ENCODE measurements at regions of chr15 and their contacts with region 1.

Region 1: DNA sequence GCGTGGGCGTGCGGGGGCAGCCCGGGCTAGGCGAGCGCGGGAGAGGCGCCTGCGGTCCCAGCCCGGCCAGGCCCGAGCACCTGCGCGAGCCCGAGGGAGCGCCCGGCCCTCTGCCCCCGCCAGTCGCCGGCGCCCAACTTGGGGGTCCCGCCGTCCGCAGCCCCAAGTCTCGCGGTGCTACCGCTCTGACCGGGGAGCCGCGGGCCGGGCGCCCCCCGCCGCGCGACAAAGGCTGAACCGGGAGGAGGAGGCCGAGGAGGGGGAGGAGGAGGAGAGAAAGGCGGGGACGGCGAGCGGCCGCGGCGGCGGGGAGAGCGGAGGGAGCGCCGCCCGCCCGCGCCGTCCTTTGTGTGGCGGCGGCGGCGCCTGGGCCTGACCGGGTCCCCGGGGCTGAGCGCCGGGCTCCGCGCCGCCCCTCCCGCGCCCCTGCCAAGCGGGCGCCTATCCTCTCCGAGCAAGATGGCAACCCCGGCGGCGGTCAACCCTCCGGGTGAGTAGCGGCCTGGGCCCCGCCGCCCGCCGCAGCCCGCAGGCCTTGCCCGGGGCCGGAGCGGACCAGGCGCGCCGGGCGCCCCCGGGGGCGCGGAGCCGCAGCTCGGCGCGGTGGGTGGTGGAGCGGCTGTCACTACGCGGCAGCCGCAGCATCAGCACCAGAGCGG is at the start of gene ARNT2:
- DNase-seq: peak; percentile 18 to 61
- ATAC-seq: peak; percentile 67 to 84 (median 72)
- H3K4me3 ChIP-seq: peak within 1 kb of the TSS; percentile 69
- H3K27ac ChIP-seq: peak within 1 kb of the TSS; percentile 50
- H3K4me1 ChIP-seq: peaks cover 11% of the 10 kb centered on the region
- H3K27me3 ChIP-seq: no peaks in the 10 kb centered on the region
- CTCF ChIP-seq: no peak
- total RNA-seq, gene ARNT2: 2.7 to 12.2 (median 8.0) TPM

Region 2: GRCh38 chr15:80323285-80323684 is 80.9 kb before region 1 on chr15:
- intact Hi-C with region 1: loop called in 1 of 2 experiments (anchors 10 kb)
- DNase-seq: no peak
- ATAC-seq: no peak
- H3K4me3 ChIP-seq: no peak overlapping the region
- H3K27ac ChIP-seq: no peak overlapping the region
- H3K4me1 ChIP-seq: no peaks in the 10 kb centered on the region
- H3K27me3 ChIP-seq: no peaks in the 10 kb centered on the region
- CTCF ChIP-seq: peak; percentile 38

Region 3: GRCh38 chr15:80512726-80513660 is 108.8 kb after region 1 on chr15:
- intact Hi-C with region 1: no loop called
- DNase-seq: no peak
- ATAC-seq: no peak
- H3K4me3 ChIP-seq: no peak overlapping the region
- H3K27ac ChIP-seq: no peak overlapping the region
- H3K4me1 ChIP-seq: no peaks in the 10 kb centered on the region
- H3K27me3 ChIP-seq: no peaks in the 10 kb centered on the region
- CTCF ChIP-seq: no peak

Region 4: DNA sequence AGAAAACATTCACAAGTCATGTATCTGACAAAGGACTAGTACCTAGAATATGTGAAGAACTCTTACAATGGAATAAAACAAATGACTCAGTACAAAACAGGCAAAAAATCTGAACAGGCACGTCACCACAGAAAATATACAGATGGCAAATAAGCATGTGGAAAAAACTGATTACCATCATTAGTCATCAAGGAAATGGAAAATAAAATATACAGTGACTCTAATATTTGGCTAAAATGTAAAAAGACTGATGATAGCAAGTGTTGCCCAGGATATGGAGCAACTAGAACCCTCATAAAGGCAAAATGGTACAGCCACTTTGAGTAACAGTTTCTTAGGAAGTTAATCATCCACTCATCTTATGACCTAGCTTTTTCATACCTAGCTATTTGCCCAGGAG is 195.2 kb after region 1 on chr15:
- intact Hi-C with region 1: no loop called
- DNase-seq: no peak
- ATAC-seq: no peak
- H3K4me3 ChIP-seq: no peak overlapping the region
- H3K27ac ChIP-seq: no peak overlapping the region
- H3K4me1 ChIP-seq: no peaks in the 10 kb centered on the region
- H3K27me3 ChIP-seq: no peaks in the 10 kb centered on the region
- CTCF ChIP-seq: no peak